ENCODE measurements at regions of chr9 and their contacts with region 1.

Region 1: GRCh38 chr9:120755827-120756434 is 37.3 kb downstream of the FBXW2 start:
- DNase-seq: peak; percentile 75
- ATAC-seq: peak; percentile 89
- H3K4me3 Mint-ChIP-seq: no peak overlapping the region
- H3K27ac Mint-ChIP-seq: peak overlapping the region; percentile 52
- H3K4me1 Mint-ChIP-seq: peaks cover 22% of the 10 kb centered on the region
- H3K27me3 Mint-ChIP-seq: no peaks in the 10 kb centered on the region
- CTCF ChIP-seq: peak; percentile 97

Region 2: DNA sequence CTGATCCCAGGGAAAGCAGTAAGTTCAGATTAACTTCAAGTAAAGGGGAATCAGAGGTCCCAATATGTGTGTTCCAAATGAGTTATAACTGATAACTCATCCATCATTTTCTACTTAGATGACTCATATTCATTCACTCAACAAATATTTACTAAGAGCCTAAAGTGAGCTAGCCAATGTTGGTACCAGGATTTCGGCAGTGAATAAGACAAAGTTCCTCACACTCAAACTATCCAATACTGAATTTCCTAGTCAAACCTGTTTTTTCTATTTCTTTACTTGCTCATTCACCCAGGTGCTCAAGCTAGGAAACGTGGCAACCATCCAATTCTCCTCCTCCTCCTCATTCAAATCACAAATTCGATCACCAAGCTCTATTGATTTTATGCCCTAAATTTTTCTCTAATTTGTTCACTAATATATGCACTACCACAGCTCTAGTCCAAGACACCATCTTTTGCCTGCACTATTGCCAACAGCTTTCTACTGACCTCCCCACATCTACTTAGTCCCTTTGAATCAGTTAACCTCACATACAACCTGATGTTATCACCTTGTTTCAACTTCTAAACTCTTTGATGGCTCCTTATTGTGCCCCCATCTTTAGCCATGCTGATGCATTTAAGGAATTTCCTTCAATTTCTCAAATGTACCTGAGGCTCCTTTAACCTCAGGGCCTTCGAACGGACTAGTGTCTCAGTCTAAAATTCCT is 11.7 kb after region 1 on chr9:
- CTCF ChIA-PET with region 1: interaction called, 22 read pairs
- POLR2A ChIA-PET with region 1: interaction called, 3 read pairs
- intact Hi-C with region 1: no loop called
- DNase-seq: no peak
- ATAC-seq: no peak
- H3K4me3 Mint-ChIP-seq: no peak overlapping the region
- H3K27ac Mint-ChIP-seq: peak overlapping the region; percentile 10
- H3K4me1 Mint-ChIP-seq: peaks cover 10% of the 10 kb centered on the region
- H3K27me3 Mint-ChIP-seq: no peaks in the 10 kb centered on the region
- CTCF ChIP-seq: no peak

Region 3: DNA sequence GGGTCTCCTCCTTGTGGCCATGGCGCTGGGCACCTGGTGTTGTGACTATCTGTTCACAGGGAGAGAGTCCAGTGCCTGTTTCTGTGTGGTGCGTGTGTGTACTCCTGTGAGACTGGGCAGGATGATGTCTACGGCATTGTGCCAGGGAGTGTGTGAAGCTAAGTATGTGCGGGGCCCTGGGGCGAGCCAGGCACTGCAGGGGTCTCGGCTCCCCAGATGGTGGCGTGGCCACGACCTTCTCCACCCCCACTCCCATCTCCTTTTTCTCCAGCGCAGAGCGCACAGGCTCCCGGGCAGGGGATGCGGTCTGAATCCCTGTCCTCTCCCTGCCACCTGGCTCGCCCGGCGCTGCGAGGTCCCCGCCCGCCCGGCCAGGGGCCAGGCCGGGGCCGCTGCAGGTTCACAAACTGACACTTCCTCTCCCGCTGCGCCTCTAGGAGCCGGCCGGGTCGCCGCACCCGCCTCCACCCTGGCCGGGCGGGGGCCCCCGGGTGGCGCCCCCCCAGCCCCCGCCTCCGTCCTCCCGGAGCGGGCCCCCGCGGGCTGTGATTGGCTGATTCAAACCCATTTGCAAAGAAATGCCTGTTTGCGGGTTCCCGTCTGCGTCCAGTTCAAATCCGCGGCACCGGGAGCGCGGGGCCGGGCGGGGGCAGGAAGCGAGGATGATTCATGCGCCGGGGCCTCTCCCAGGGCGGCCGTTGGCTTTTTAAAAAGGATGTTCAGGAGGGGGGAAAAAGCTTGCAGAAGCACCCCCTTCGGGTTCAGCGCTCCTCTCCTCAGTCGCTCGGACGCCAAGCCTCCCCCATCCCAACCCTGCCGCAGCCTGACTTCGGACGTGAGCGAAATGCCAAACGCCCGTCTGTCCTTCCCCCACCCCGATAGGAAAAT is 120.3 kb after region 1 on chr9:
- CTCF ChIA-PET with region 1: no interaction called
- POLR2A ChIA-PET with region 1: no interaction called
- intact Hi-C with region 1: loop called (anchors 5 kb)
- DNase-seq: peak; percentile 96
- ATAC-seq: peak; percentile 62
- H3K4me3 Mint-ChIP-seq: peak overlapping the region; percentile 91
- H3K27ac Mint-ChIP-seq: peak overlapping the region; percentile 93
- H3K4me1 Mint-ChIP-seq: peaks cover 75% of the 10 kb centered on the region
- H3K27me3 Mint-ChIP-seq: no peaks in the 10 kb centered on the region
- CTCF ChIP-seq: no peak

Region 4: DNA sequence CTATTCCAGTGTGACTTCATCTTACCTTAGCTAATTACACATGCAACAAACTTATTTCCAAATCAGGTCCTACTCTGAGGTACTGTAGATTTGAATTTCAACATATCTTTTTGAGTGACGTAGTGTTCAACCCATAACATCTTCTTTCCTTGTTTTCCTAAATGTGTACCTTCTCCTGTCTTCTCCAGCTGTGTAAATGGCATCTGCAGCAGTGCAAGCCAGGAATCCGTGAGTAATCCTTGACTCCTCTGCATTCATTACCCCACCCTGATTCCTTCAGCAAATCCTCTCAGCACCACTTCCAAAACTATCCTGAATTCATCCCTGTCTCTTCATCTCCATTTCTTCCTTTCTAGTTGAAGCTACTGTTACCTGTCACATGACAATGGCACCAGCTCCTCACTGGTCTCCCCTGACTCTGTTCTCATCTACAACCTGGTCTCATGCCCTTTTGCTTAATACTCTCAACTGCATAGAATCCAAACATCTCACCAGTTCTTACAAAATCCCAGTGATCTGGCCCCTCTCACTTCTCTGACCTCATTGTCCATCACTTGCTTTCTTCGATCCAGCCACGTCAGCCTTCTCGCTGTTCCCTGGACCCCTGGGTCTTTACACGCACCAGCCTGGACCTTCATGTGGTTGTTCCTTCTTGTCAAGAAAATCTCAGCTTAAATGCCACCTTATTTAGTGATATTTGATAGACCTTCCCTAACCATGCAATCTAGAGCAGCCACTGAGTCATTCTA is 185.3 kb after region 1 on chr9:
- CTCF ChIA-PET with region 1: interaction called, 13 read pairs
- POLR2A ChIA-PET with region 1: interaction called, 3 read pairs
- intact Hi-C with region 1: no loop called
- DNase-seq: no peak
- ATAC-seq: no peak
- H3K4me3 Mint-ChIP-seq: no peak overlapping the region
- H3K27ac Mint-ChIP-seq: no peak overlapping the region
- H3K4me1 Mint-ChIP-seq: peaks cover 17% of the 10 kb centered on the region
- H3K27me3 Mint-ChIP-seq: no peaks in the 10 kb centered on the region
- CTCF ChIP-seq: no peak

Region 5: GRCh38 chr9:121059998-121060636 is 304.2 kb after region 1 on chr9:
- CTCF ChIA-PET with region 1: interaction called, 76 read pairs
- POLR2A ChIA-PET with region 1: no interaction called
- intact Hi-C with region 1: no loop called
- DNase-seq: peak; percentile 26
- ATAC-seq: no peak
- H3K4me3 Mint-ChIP-seq: no peak overlapping the region
- H3K27ac Mint-ChIP-seq: no peak overlapping the region
- H3K4me1 Mint-ChIP-seq: peaks cover 19% of the 10 kb centered on the region
- H3K27me3 Mint-ChIP-seq: no peaks in the 10 kb centered on the region
- CTCF ChIP-seq: peak; percentile 77

Measured in activated CD8-positive, alpha-beta T cell treated with anti-CD3 and anti-CD28 coated beads for 36 hours (primary cell).